Activated CD4-positive, alpha-beta T cell treated with anti-CD3 and anti-CD28 coated beads, Interleukin-2, amount 10 ng/mL, durations not matched to agents 24 days and 14 days (primary cell): ENCODE measurements at regions of chrX and their contacts with region 1.

Region 1: DNA sequence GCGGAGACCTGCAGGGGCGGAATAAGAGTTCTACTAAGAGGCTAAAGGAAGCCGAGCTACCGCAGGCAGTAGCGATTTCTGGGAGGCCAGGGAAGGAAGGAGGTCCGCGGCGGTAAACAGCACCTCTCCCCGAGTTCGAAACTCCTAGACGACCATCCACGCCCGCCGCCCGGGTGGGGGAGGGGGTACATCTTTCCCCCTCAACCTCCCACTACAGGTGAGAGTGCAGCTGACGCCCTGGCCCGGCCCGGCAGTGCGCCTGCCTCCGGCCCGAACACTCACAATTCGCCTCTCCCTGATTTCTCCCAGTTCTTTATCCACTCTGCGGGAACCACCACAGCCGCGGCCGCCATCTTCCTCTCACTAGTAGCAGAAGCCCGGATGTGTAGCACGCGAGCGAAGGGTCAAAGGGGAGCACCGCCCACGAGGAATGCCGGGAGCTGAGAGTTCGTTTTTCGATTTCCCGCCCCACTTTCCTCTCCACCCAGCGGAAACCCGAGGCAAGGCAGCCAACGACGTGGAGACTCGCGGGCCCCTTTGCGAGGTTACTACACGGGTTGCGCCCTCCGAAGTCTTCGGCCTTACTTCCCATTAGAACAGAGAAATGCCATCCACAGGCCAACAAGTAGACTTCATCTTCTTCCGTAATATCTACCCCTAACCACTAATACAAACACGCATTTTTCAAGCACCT is at the start of gene THOC2:
- DNase-seq: peak; percentile 92
- H3K4me3 Mint-ChIP-seq: peak within 1 kb of the TSS; percentile 97
- H3K27ac Mint-ChIP-seq: peak within 1 kb of the TSS; percentile 95
- H3K4me1 Mint-ChIP-seq: peaks cover 17% of the 10 kb centered on the region
- H3K27me3 Mint-ChIP-seq: no peaks in the 10 kb centered on the region
- total RNA-seq, gene THOC2: 91.2 and 96.7 TPM in 2 replicates

Region 2: DNA sequence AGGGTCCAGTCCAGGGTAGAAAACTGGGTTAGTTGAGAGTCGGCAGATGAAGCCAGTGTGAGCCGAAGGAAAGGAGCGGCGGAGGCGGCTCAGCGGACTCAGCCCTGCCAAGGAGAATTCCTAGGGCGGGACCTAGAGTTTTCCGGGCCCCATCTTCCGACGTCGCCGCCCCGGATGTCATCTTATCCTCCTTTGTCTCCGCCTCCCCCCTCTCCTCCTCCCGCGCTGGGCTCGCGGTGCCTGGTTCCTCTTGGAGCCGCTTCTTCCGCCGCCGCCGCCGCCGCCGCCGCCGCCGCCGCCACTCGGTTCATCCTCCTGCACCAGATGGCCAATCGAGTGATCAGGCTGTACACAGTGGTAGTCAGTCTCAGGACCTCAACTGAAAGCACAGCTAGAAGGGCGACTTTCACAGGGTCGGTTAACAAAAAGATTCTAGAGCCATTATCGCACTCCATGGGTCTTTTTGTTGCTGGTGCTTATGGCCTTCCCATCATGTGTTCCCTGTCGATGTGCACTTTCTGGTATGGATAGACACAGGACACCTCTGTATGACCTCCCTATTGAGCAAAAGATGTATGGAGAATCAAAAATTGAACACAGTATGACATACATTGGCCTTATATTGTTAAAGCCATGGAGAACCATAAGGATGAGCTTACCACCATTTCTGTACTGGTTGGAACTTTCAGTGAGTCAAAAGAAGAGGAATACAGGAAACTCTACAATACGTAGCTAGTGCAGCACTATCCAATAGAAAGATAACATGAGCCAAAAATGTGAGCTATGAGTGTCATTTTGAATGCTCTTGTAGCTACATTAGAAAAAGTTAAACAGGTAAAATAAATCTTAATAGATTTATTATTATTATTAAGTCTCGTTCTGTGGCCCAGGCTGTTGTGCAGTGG is 32.4 kb after region 1 on chrX:
- intact Hi-C with region 1: loop called (anchors 2 kb)
- DNase-seq: peak; percentile 82
- H3K4me3 Mint-ChIP-seq: peak overlapping the region; percentile 83
- H3K27ac Mint-ChIP-seq: peak overlapping the region; percentile 49
- H3K4me1 Mint-ChIP-seq: peaks cover 9% of the 10 kb centered on the region
- H3K27me3 Mint-ChIP-seq: peaks cover 2% of the 10 kb centered on the region